Endothelial cell of umbilical vein (primary cell): ENCODE measurements at regions of chr18 and their contacts with region 1.

Region 1: GRCh38 chr18:44482761-44483160 is 197.9 kb upstream of the SETBP1 start:
- DNase-seq: no peak
- H3K4me3 ChIP-seq: no peak overlapping the region
- H3K27ac ChIP-seq: no peak overlapping the region
- H3K4me1 ChIP-seq: no peaks in the 10 kb centered on the region
- H3K27me3 ChIP-seq: no peaks in the 10 kb centered on the region
- CTCF ChIP-seq: no peak
- POLR2A ChIP-seq: no peak

Region 2: GRCh38 chr18:44526705-44527415 is 44.1 kb after region 1 on chr18:
- CTCF ChIA-PET with region 1: no interaction called
- POLR2A ChIA-PET with region 1: no interaction called
- dilution Hi-C with region 1: no loop called
- intact Hi-C with region 1: loop called (anchors 1 kb)
- DNase-seq: no peak
- H3K4me3 ChIP-seq: no peak overlapping the region
- H3K27ac ChIP-seq: no peak overlapping the region
- H3K4me1 ChIP-seq: no peaks in the 10 kb centered on the region
- H3K27me3 ChIP-seq: peaks cover 0 to 1% of the 10 kb centered on the region in 2 experiments
- CTCF ChIP-seq: no peak
- POLR2A ChIP-seq: no peak